ENCODE measurements at regions of chr1 and their contacts with region 1.

Region 1: GRCh38 chr1:233613252-233614174 is at the start of gene KCNK1:
- DNase-seq: peak; percentile 85 to 93
- H3K4me3 ChIP-seq: peak within 1 kb of the TSS; percentile 62
- H3K27ac ChIP-seq: peak within 1 kb of the TSS; percentile 88
- H3K4me1 ChIP-seq: peaks cover 25% of the 10 kb centered on the region
- H3K27me3 ChIP-seq: no peaks in the 10 kb centered on the region
- CTCF ChIP-seq: no peak
- total RNA-seq, gene KCNK1: 57.6 and 60.6 TPM in 2 replicates

Region 2: DNA sequence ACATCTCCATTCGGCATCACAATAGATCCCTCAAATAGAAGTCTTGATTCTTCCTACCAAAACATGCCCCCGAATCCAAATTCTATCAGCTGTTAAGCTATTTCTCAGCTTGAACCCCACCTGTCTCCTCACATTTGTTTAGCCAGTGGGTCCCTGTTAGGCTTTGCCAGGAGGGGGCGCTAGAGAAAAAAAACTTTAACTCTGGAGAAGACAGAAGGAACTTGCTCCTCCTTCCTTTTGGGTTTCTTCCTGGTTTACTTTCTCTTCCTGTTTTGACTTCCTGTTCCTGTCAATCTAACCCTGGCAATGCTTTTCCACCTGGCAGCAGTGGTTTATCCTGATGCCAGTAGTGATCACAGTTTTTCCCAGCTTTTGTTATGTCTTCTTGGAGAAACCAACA is 95.2 kb before region 1 on chr1:
- CTCF ChIA-PET with region 1: no interaction called
- POLR2A ChIA-PET with region 1: no interaction called
- intact Hi-C with region 1: loop called (anchors 2 kb)
- DNase-seq: peak; percentile 25 to 50
- H3K4me3 ChIP-seq: no peak overlapping the region
- H3K27ac ChIP-seq: no peak overlapping the region
- H3K4me1 ChIP-seq: peaks cover 16% of the 10 kb centered on the region
- H3K27me3 ChIP-seq: no peaks in the 10 kb centered on the region
- CTCF ChIP-seq: peak; percentile 81

Region 3: GRCh38 chr1:233656032-233656620 is 42.6 kb after region 1 on chr1:
- CTCF ChIA-PET with region 1: no interaction called
- POLR2A ChIA-PET with region 1: no interaction called
- intact Hi-C with region 1: loop called (anchors 1 kb)
- DNase-seq: peak; percentile 17 to 46
- H3K4me3 ChIP-seq: peak overlapping the region; percentile 37; the same call in 1 of the 2 replicates
- H3K27ac ChIP-seq: peak overlapping the region; percentile 96
- H3K4me1 ChIP-seq: peaks cover 75% of the 10 kb centered on the region
- H3K27me3 ChIP-seq: no peaks in the 10 kb centered on the region
- CTCF ChIP-seq: no peak

Region 4: DNA sequence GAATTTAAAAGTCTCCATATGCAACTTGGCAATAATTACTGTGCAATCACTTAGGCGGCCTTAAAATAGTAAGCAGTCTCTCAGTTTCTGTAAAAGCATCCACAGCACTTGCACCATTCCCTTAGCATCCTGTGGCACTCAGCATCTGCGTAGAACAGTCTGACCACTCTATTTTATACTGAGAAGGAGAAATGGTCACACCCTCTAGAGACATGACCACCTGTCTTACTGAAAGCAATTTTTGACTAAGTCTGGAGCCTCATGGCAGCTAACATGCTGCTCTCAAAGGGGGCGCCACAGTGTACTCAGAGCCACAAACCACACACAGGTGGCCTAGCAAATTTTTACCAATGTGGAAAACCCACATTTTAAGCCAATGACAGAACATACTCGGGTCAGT is 62.4 kb after region 1 on chr1:
- CTCF ChIA-PET with region 1: no interaction called
- POLR2A ChIA-PET with region 1: no interaction called
- intact Hi-C with region 1: loop called (anchors 1 kb)
- DNase-seq: no peak
- H3K4me3 ChIP-seq: no peak overlapping the region
- H3K27ac ChIP-seq: no peak overlapping the region
- H3K4me1 ChIP-seq: peaks cover 17% of the 10 kb centered on the region; the same call in 1 of the 2 replicates
- H3K27me3 ChIP-seq: no peaks in the 10 kb centered on the region
- CTCF ChIP-seq: no peak

Region 5: GRCh38 chr1:233790662-233791375 is 177.3 kb after region 1 on chr1:
- CTCF ChIA-PET with region 1: no interaction called
- POLR2A ChIA-PET with region 1: interaction called, 3 read pairs
- intact Hi-C with region 1: loop called (anchors 1 kb)
- DNase-seq: peak; percentile 34 to 43
- H3K4me3 ChIP-seq: no peak overlapping the region
- H3K27ac ChIP-seq: no peak overlapping the region
- H3K4me1 ChIP-seq: 0 out of 2 replicates have a peak, but pooled peaks cover 7% of the 10 kb centered on the region
- H3K27me3 ChIP-seq: no peaks in the 10 kb centered on the region
- CTCF ChIP-seq: peak; percentile 97

Measured in PC-9 (cell line).